Posterior vena cava (tissue), 2 donors: ENCODE measurements at regions of chr6 and their contacts with region 1.

Region 1: GRCh38 chr6:118586746-118587485 is 38.8 kb downstream of the PLN start:
- DNase-seq: no peak

Region 2: DNA sequence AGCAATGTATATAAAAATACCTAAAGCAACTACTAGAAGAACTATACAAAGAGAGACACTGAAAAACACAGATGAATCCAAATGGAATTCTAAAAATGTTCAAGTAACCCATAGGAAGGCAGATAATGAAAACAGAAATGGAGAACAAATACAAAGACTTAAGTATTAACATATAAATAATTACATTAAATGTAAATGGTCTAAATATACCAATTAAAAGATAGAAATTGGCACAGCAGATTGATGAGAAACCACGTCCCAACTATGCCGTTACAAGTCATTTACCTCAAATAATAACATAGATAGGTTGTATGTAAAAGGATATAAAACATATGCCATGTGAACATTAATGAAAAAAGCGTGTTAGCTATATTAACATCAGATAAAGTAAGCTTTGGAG is 24.4 kb after region 1 on chr6:
- intact Hi-C with region 1: loop called in 1 of 2 experiments (anchors 2 kb)
- DNase-seq: no peak

Region 3: GRCh38 chr6:118800394-118801071 is 213.6 kb after region 1 on chr6:
- intact Hi-C with region 1: no loop called
- DNase-seq: peak; percentile 86